SK-N-SH (cell line): ENCODE measurements at regions of chr9 and their contacts with region 1.

Region 1: GRCh38 chr9:12448246-12448645 is 244.9 kb upstream of the TYRP1 start:
- DNase-seq: no peak
- H3K4me3 ChIP-seq: no peak overlapping the region
- H3K27ac ChIP-seq: no peak overlapping the region
- H3K4me1 ChIP-seq: no peaks in the 10 kb centered on the region
- H3K27me3 ChIP-seq: no peaks in the 10 kb centered on the region
- CTCF ChIP-seq: no peak
- EP300 ChIP-seq: no peak
- RAD21 ChIP-seq: no peak

Region 2: GRCh38 chr9:12464910-12465512 is 16.8 kb after region 1 on chr9:
- CTCF ChIA-PET with region 1: interaction called, 10 read pairs
- POLR2A ChIA-PET with region 1: no interaction called
- DNase-seq: peak; percentile 6
- H3K4me3 ChIP-seq: no peak overlapping the region; a peak in 1 of 4 replicates
- H3K27ac ChIP-seq: no peak overlapping the region
- H3K4me1 ChIP-seq: no peaks in the 10 kb centered on the region
- H3K27me3 ChIP-seq: no peaks in the 10 kb centered on the region
- CTCF ChIP-seq: peak; percentile 83
- EP300 ChIP-seq: no peak
- RAD21 ChIP-seq: peak; percentile 66